ENCODE measurements at regions of chr2 and their contacts with region 1.

Region 1: GRCh38 chr2:218360447-218360846 is 3.8 kb downstream of the CATIP start:
- DNase-seq: no peak
- H3K4me3 ChIP-seq: no peak overlapping the region
- H3K27ac ChIP-seq: no peak overlapping the region
- H3K4me1 ChIP-seq: peaks cover 0 to 13% (median 6%) of the 10 kb centered on the region in 4 experiments; a peak in 6 of 7 replicates
- H3K27me3 ChIP-seq: no peaks in the 10 kb centered on the region; a peak in 1 of 7 replicates
- CTCF ChIP-seq: no peak
- EP300 ChIP-seq: no peak
- POLR2A ChIP-seq: no peak
- RAD21 ChIP-seq: no peak

Region 2: GRCh38 chr2:218275371-218276072 is 84.9 kb before region 1 on chr2:
- CTCF ChIA-PET with region 1: interaction called, 29 read pairs
- POLR2A ChIA-PET with region 1: interaction called, 5 read pairs
- DNase-seq: no peak
- H3K4me3 ChIP-seq: no peak overlapping the region
- H3K27ac ChIP-seq: no peak overlapping the region
- H3K4me1 ChIP-seq: peaks cover 0 to 4% (median 2%) of the 10 kb centered on the region in 4 experiments; a peak in 4 of 7 replicates
- H3K27me3 ChIP-seq: no peaks in the 10 kb centered on the region
- CTCF ChIP-seq: no peak
- EP300 ChIP-seq: no peak
- POLR2A ChIP-seq: no peak
- RAD21 ChIP-seq: no peak

Region 3: DNA sequence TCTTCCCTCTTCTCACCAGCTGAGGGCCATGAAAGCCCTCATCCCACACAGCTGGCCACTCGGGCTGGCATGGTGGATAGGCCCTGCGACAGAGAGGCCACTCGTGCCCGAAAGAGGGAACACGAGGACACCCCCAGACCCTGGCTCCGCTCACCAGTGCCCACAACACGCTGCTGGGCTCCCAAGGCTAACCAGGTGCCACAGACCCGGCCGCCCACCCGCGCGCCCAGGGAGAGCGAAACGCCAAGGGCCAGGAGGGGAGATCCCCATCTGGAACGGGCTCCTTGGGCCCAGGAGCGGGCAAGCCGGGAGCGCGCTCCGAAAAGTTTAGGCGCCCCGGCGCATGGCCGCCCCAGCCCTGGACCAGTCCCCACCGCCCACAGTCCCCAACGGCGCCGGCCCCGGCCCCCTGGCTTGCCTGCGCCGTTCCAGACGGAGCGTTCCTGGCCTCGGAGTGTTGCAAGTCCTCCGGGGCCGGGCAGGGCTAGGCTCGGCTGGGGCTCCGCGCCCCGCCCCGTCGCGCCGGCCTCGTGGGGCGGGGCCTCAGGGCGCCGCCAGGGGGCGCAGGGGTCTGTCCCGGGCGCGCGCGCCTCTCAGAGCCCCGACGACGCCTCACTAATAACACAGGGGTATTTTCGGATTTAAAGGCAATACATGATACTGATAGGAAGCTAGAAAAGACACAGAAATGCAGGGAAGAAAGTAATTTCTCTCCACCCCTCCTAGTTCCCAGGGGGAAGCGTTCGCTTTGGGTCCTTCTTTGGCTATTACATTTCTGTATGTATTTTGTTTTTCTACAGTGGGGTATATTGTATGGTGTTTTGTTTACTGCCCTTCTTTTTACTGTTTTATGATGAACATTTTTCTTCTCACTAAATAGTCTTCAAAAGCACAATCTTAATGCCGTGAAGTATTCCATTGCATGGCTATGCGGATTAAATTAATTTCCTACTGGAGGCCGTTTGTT is 68.1 kb before region 1 on chr2 and contains the start of gene TMBIM1:
- CTCF ChIA-PET with region 1: interaction called, 192 read pairs
- POLR2A ChIA-PET with region 1: interaction called, 3 read pairs
- DNase-seq: peak in 1 of 2 experiments; percentile 88
- H3K4me3 ChIP-seq: peak within 1 kb of the TSS; percentile 51 to 66 (median 64)
- H3K27ac ChIP-seq: no peak within 1 kb of the TSS
- H3K4me1 ChIP-seq: peaks cover 0 to 9% (median 4%) of the 10 kb centered on the region in 4 experiments; a peak in 6 of 7 replicates
- H3K27me3 ChIP-seq: no peaks in the 10 kb centered on the region
- CTCF ChIP-seq: peak; percentile 64 to 87 (median 73)
- EP300 ChIP-seq: no peak
- POLR2A ChIP-seq: no peak
- RAD21 ChIP-seq: peak; percentile 34 to 66; a peak in 3 of 4 replicates
- total RNA-seq, gene TMBIM1: 22.1 and 24.5 TPM in 2 replicates

Region 4: DNA sequence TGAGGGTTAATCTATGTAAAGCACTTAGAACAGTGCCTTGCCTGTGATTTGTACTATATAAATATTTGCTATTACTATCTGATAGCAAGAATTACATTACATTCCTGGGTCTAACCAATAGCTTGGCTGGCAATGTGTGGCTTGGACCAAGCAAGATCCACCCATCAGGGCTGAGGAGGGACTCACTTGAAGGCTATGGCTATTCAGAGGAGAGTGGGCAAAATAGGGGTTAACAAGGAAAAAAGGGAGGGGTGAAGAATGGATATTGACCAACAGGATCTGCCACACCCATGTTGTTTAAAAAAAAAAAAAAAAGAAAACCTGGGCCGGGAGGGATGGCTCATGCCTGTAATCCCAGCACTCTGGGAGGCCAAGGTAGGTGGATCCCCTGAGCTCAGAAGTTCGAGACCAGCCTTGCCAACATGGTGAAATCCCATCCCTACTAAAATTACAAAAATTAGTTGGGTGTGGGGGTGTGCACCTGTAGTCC is 48.1 kb before region 1 on chr2:
- CTCF ChIA-PET with region 1: interaction called, 25 read pairs
- POLR2A ChIA-PET with region 1: no interaction called
- DNase-seq: no peak
- H3K4me3 ChIP-seq: no peak overlapping the region
- H3K27ac ChIP-seq: no peak overlapping the region
- H3K4me1 ChIP-seq: no peaks in the 10 kb centered on the region
- H3K27me3 ChIP-seq: no peaks in the 10 kb centered on the region
- CTCF ChIP-seq: no peak
- EP300 ChIP-seq: no peak
- POLR2A ChIP-seq: no peak
- RAD21 ChIP-seq: no peak

Region 5: DNA sequence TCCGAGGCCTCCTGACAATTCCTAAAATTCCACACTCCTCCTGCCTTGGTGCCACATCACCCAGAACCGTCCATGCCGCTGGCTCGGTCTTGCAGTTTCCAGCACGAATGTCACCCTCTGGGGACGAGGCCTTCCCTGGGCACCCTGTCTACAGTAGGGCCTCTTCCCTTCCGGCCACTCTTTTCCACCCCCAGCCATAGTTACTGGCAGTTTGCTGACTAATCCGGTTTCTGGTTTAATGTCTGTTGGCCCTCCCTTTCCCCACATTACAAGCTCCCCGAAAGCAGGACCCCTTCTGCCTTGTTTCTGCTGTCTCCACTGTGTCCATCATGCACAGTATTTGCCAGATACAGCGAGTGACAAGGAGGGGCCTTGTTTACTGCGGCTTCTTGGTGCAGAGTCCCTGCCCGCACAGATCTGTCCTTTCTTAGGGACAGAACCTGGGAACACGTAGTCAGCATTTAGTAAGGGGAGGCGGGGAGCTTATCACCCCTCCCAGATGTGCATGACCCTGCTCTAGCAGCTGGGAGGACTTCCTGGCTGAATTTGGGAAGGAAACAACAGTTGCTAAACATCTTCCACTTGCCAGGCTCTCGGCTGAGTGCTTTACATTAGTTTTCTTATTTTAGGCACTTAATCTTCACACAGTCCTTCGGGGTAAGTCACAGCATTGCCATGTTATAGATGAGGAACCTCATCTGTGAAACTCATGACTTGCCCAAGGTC is 27.4 kb before region 1 on chr2:
- CTCF ChIA-PET with region 1: interaction called, 24 read pairs
- POLR2A ChIA-PET with region 1: no interaction called
- DNase-seq: no peak
- H3K4me3 ChIP-seq: no peak overlapping the region
- H3K27ac ChIP-seq: no peak overlapping the region
- H3K4me1 ChIP-seq: peaks cover 0 to 7% (median 3%) of the 10 kb centered on the region in 4 experiments; a peak in 5 of 7 replicates
- H3K27me3 ChIP-seq: no peaks in the 10 kb centered on the region
- CTCF ChIP-seq: no peak
- EP300 ChIP-seq: no peak
- POLR2A ChIP-seq: no peak
- RAD21 ChIP-seq: no peak

Region 6: DNA sequence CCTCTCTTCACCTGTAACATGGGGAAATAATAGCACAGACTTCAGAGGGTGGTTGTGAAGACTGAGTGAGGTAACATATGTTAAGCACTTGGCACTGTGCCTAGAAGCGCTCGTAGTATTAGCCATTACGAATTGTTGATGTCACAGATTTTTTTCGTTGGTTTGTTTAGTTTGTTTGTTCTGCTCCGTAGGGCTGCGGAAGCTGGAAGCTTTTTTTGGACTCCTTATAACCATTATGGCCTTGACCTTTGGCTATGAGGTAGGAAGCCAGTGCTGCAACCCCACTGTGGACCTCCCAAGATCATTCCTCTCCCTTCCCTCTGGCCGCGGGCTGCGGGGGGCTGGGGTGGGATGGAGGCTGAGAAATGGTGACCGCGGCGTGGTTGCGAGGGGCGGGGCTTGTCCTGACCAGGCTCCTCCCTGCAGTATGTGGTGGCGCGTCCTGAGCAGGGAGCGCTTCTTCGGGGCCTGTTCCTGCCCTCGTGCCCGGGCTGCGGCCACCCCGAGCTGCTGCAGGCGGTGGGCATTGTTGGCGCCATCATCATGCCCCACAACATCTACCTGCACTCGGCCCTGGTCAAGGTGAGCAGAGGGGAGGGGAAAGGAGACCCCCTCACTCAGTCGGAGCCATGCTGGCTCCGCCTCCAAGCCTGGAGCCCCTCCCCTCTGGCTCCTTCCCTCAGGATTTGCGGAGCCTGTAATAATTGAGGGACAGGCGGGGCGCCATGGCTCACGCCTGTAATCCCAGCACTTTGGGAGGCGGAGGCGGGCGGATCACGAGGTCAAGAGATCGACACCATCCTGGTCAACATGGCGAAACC is 27.1 kb after region 1 on chr2:
- CTCF ChIA-PET with region 1: interaction called, 13 read pairs
- POLR2A ChIA-PET with region 1: no interaction called
- DNase-seq: peak in 1 of 2 experiments; percentile 94
- H3K4me3 ChIP-seq: peak overlapping the region; percentile 41 to 76 (median 58)
- H3K27ac ChIP-seq: no peak overlapping the region; the same call in 1 of the 2 replicates
- H3K4me1 ChIP-seq: peaks cover 0 to 5% (median 3%) of the 10 kb centered on the region in 4 experiments; a peak in 5 of 7 replicates
- H3K27me3 ChIP-seq: peaks cover 0 to 17% (median 11%) of the 10 kb centered on the region in 4 experiments; a peak in 5 of 7 replicates
- CTCF ChIP-seq: no peak
- EP300 ChIP-seq: no peak
- POLR2A ChIP-seq: peak in 1 of 2 experiments; percentile 70; a peak in 2 of 3 replicates
- RAD21 ChIP-seq: no peak

Measured in H1 (cell line).